ENCODE measurements at regions of chr2 and their contacts with region 1.

Region 1: GRCh38 chr2:26591619-26592505 is 49.3 kb downstream of the CIB4 start:
- DNase-seq: no peak
- CTCF ChIP-seq: no peak

Region 2: DNA sequence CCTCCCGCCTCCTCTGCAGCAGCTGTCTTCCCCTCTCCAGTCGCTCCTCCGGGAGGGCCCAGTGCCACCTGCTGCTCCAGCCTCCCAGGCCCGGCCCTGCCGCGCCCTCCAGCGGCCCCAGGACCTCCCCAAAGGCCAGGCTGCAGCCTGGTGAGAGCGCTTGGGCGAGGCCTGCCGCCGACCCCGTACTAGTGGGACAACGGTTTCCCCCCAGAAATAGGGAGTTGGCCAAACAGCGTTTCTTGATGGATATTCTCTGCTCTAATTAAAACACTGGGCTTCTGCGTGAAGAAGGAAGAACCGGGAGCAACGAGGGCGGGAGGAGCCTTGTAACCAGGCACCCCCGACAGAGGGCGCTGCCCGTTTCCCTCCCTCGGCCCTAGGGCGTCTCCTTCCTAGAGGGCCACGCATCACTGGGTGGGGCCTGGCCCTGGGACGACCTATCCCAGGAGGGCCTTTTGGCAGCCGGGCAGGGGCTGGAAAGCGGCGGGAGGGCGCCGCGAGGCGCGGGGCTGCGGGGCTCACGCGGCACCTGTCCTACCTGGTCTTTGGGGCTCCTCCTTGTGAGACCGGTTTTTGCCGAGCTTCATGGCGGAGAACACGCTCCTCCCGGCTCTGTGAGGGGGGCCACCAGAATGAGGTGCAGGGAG is 88.5 kb before region 1 on chr2:
- CTCF ChIA-PET with region 1: no interaction called
- POLR2A ChIA-PET with region 1: no interaction called
- DNase-seq: peak; percentile 92
- CTCF ChIP-seq: peak; percentile 80

Region 3: DNA sequence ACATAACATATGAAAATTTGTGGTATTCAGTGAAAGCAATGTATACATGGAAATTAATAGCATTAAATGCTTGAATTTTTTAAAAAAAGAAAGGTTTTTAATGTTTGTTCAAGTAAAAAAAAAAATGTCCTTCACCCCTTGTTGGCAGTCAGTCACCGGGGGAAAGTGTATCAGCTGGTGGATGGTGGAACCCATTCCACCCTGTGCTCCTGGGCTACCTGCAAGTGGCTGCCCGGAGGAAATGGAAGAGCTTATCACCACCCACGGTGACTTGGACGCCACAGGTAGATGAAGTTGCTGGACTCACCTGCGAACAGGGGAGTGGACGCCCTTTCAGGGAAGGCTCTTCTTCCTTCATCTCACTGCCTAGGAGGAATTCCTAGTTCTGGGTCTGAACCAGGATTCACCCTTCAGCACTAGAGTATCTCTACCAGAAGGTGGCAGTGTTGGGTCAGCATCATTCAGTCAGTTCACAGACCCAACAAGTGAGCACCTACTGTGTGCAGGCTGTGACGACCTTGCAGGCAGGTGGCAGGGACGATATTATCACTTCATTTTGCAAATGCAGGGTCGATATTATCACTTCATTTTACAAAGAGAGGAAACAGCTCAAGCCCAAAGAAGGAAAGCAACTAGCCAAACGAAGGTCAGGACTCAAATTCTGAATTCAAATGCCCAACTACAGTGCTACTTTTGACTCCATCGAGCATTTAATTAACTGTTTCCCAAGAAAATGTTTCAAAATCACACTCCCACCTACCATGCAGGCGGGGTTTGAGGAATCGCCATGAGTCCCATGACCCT is 13.5 kb after region 1 on chr2:
- CTCF ChIA-PET with region 1: interaction called, 35 read pairs
- POLR2A ChIA-PET with region 1: no interaction called
- DNase-seq: peak; percentile 64
- CTCF ChIP-seq: peak; percentile 74

Region 4: GRCh38 chr2:26630669-26631360 is 39.0 kb after region 1 on chr2:
- CTCF ChIA-PET with region 1: no interaction called
- POLR2A ChIA-PET with region 1: no interaction called
- DNase-seq: no peak
- CTCF ChIP-seq: no peak

Region 5: GRCh38 chr2:26692279-26692896 is 100.5 kb after region 1 on chr2 and contains the start of gene KCNK3:
- CTCF ChIA-PET with region 1: no interaction called
- POLR2A ChIA-PET with region 1: interaction called, 10 read pairs
- DNase-seq: peak; percentile 50
- CTCF ChIP-seq: no peak